ENCODE measurements at regions of chr6 and their contacts with region 1.

Region 1: GRCh38 chr6:35342258-35343091 is at the start of gene PPARD:
- DNase-seq: peak; percentile 99
- ATAC-seq: peak; percentile 98
- H3K4me3 Mint-ChIP-seq: peak within 1 kb of the TSS; percentile 87
- H3K27ac Mint-ChIP-seq: peak within 1 kb of the TSS; percentile 94
- H3K4me1 Mint-ChIP-seq: peaks cover 45% of the 10 kb centered on the region
- H3K27me3 Mint-ChIP-seq: no peaks in the 10 kb centered on the region
- total RNA-seq, gene PPARD: 16.5 to 19.2 TPM

Region 2: GRCh38 chr6:35354361-35355135 is 12.1 kb after region 1 on chr6:
- CTCF ChIA-PET with region 1: no interaction called
- POLR2A ChIA-PET with region 1: no interaction called
- intact Hi-C with region 1: no loop called
- DNase-seq: no peak
- ATAC-seq: no peak
- H3K4me3 Mint-ChIP-seq: no peak overlapping the region
- H3K27ac Mint-ChIP-seq: peak overlapping the region; percentile 16
- H3K4me1 Mint-ChIP-seq: peaks cover 46% of the 10 kb centered on the region
- H3K27me3 Mint-ChIP-seq: no peaks in the 10 kb centered on the region

Region 3: GRCh38 chr6:35415065-35415991 is 72.9 kb after region 1 on chr6:
- CTCF ChIA-PET with region 1: interaction called, 5 read pairs
- POLR2A ChIA-PET with region 1: interaction called, 4 read pairs
- intact Hi-C with region 1: loop called in 1 of 2 experiments (anchors 1 kb)
- DNase-seq: peak; percentile 49
- ATAC-seq: peak; percentile 57
- H3K4me3 Mint-ChIP-seq: no peak overlapping the region
- H3K27ac Mint-ChIP-seq: peak overlapping the region; percentile 0
- H3K4me1 Mint-ChIP-seq: peaks cover 37% of the 10 kb centered on the region
- H3K27me3 Mint-ChIP-seq: no peaks in the 10 kb centered on the region

Region 4: GRCh38 chr6:35468181-35468979 is 125.9 kb after region 1 on chr6 and contains the start of gene RPL10A:
- CTCF ChIA-PET with region 1: interaction called, 16 read pairs
- POLR2A ChIA-PET with region 1: interaction called, 7 read pairs
- intact Hi-C with region 1: loop called (anchors 1 kb)
- DNase-seq: peak; percentile 97
- ATAC-seq: peak; percentile 87
- H3K4me3 Mint-ChIP-seq: peak within 1 kb of the TSS; percentile 93
- H3K27ac Mint-ChIP-seq: peak within 1 kb of the TSS; percentile 98
- H3K4me1 Mint-ChIP-seq: peaks cover 43% of the 10 kb centered on the region
- H3K27me3 Mint-ChIP-seq: no peaks in the 10 kb centered on the region
- total RNA-seq, gene RPL10A: 1,952 to 2,334 TPM

Region 5: DNA sequence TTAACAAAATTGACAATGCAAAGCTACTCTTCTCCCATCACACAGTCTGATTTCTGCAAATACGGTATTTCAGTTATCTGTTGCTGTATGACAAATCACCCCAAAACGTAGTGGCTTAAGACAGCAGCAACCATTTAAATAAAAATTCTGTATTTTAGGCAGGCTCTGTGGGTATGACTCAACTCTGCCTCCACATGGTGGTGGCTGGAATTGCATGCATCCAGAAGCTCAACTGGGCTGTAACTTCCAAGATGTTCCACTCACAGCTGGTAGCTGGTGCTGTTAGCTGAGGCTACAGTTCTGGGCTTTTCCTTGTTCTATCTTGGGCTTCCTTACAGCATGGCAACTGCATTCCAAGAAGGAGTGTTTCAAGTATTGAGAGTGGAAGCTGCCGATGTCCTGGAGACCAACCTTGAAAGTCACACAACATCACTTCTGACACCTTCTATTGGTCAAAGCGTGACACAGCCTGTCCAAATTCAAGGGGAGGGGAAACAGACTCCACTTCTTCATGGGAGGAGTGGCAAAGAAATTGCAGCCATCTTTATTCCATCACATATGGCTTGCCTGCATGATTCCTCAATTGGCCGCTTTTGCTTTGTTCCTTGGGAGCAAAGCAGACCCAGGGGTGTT is 209.9 kb after region 1 on chr6:
- CTCF ChIA-PET with region 1: interaction called, 4 read pairs
- POLR2A ChIA-PET with region 1: no interaction called
- intact Hi-C with region 1: loop called in 1 of 2 experiments (anchors 2 kb)
- DNase-seq: peak; percentile 80
- ATAC-seq: peak; percentile 60
- H3K4me3 Mint-ChIP-seq: no peak overlapping the region
- H3K27ac Mint-ChIP-seq: no peak overlapping the region
- H3K4me1 Mint-ChIP-seq: no peaks in the 10 kb centered on the region
- H3K27me3 Mint-ChIP-seq: no peaks in the 10 kb centered on the region

Measured in activated CD4-positive, alpha-beta T cell treated with anti-CD3 and anti-CD28 coated beads for 36 hours (primary cell).